Dendritic cell treated with granulocyte-macrophage colony-stimulating factor and Interleukin-4, amounts not matched to agents 40 ng/mL and 50 ng/mL, for 4 days (primary cell): ENCODE measurements at regions of chr21 and their contacts with region 1.

Region 1: DNA sequence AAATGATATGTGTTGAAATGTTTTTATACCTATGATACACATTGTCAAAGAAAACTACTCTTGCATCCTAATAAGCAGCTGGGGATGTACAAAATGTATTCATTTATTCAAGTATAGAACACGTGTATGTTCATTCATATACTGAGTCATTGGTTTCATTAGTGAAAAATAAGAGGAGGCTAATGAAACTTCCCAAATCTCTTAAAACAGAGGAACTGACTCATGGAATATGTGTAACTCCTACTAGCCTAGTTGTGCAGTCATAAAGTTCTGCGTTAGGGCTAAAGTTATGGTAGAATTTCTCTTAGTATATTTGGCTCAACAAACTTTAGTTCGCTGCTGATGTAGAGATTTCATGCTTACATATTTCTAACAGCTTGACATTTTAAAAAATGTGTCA is 441.6 kb downstream of the NCAM2 start:
- H3K4me3 Mint-ChIP-seq: no peak overlapping the region
- H3K27ac Mint-ChIP-seq: no peak overlapping the region
- H3K4me1 Mint-ChIP-seq: no peaks in the 10 kb centered on the region
- H3K27me3 Mint-ChIP-seq: no peaks in the 10 kb centered on the region

Region 2: GRCh38 chr21:21383126-21383525 is 56.6 kb before region 1 on chr21:
- intact Hi-C with region 1: loop called (anchors 10 kb)
- H3K4me3 Mint-ChIP-seq: no peak overlapping the region
- H3K27ac Mint-ChIP-seq: no peak overlapping the region
- H3K4me1 Mint-ChIP-seq: no peaks in the 10 kb centered on the region
- H3K27me3 Mint-ChIP-seq: no peaks in the 10 kb centered on the region